ENCODE measurements at regions of chr17 and their contacts with region 1.

Region 1: DNA sequence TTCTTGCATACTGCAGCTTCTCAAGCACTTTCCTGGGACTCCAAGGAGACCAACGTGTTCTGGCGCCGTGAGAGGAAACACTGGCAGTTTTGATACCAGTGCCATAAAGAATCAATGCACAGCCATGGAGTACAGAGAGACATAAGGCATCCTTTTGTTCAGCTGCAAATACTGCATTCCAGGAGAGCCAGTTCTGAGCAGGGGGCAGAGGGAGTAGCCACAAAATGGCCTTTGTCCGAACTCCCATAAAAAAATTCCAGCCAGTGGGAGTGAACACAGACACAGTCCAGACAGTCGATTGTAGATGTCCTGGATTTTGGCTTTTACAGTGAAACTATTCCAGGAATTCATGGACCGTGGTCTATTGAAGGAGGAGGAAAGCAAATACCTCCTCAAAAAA is 36.2 kb upstream of the TEKT3 start:
- DNase-seq: peak; percentile 74 to 86
- H3K4me3 ChIP-seq: no peak overlapping the region
- H3K4me3 Mint-ChIP-seq: peak overlapping the region; percentile 23
- H3K27ac Mint-ChIP-seq: peak overlapping the region; percentile 85
- H3K4me1 ChIP-seq: peaks cover 21% of the 10 kb centered on the region
- H3K4me1 Mint-ChIP-seq: peaks cover 7% of the 10 kb centered on the region
- H3K27me3 ChIP-seq: no peaks in the 10 kb centered on the region
- H3K27me3 Mint-ChIP-seq: no peaks in the 10 kb centered on the region
- CTCF ChIP-seq: no peak

Region 2: DNA sequence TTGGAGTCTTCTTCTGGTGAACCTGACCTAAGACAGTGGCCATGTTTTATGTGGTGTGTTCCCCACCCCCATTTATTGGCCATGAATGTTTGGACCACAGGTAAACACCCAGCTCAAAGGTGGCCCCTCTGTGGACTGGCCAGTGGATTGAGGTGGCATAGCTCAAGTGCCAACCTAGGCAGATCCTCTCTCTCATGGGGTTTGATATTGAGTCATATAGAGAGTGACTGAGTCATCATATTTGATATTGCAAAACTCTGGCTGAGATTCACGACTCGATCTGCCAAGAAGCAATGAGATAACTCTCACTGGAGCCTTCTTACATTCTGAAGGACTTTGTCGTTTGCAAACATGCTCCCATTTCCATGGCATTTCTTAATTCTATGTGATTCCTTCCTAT is 25.7 kb before region 1 on chr17:
- CTCF ChIA-PET with region 1: no interaction called
- POLR2A ChIA-PET with region 1: no interaction called
- intact Hi-C with region 1: no loop called
- DNase-seq: no peak
- H3K4me3 ChIP-seq: no peak overlapping the region
- H3K4me3 Mint-ChIP-seq: no peak overlapping the region
- H3K27ac Mint-ChIP-seq: no peak overlapping the region
- H3K4me1 ChIP-seq: no peaks in the 10 kb centered on the region
- H3K4me1 Mint-ChIP-seq: peaks cover 14% of the 10 kb centered on the region
- H3K27me3 ChIP-seq: no peaks in the 10 kb centered on the region
- H3K27me3 Mint-ChIP-seq: no peaks in the 10 kb centered on the region
- CTCF ChIP-seq: no peak

Region 3: GRCh38 chr17:15432807-15433600 is 55.4 kb after region 1 on chr17:
- CTCF ChIA-PET with region 1: no interaction called
- POLR2A ChIA-PET with region 1: no interaction called
- intact Hi-C with region 1: loop called (anchors 2 kb)
- DNase-seq: peak; percentile 53 to 65
- H3K4me3 ChIP-seq: no peak overlapping the region
- H3K4me3 Mint-ChIP-seq: no peak overlapping the region
- H3K27ac Mint-ChIP-seq: peak overlapping the region; percentile 79
- H3K4me1 ChIP-seq: peaks cover 42% of the 10 kb centered on the region
- H3K4me1 Mint-ChIP-seq: no peaks in the 10 kb centered on the region
- H3K27me3 ChIP-seq: no peaks in the 10 kb centered on the region
- H3K27me3 Mint-ChIP-seq: no peaks in the 10 kb centered on the region
- CTCF ChIP-seq: no peak